Activated CD8-positive, alpha-beta T cell treated with anti-CD3 and anti-CD28 coated beads, Interleukin-2, amount 10 ng/mL, durations not matched to agents 7 days and 5 days (primary cell): ENCODE measurements at regions of chr5 and their contacts with region 1.

Region 1: GRCh38 chr5:112976432-112977309 is at the start of gene DCP2:
- DNase-seq: peak; percentile 98
- ATAC-seq: peak; percentile 98
- H3K4me3 Mint-ChIP-seq: peak within 1 kb of the TSS; percentile 97
- H3K27ac Mint-ChIP-seq: peak within 1 kb of the TSS; percentile 96
- H3K4me1 Mint-ChIP-seq: peaks cover 36% of the 10 kb centered on the region
- H3K27me3 Mint-ChIP-seq: no peaks in the 10 kb centered on the region
- total RNA-seq, gene DCP2: 119 to 128 TPM

Region 2: GRCh38 chr5:112355058-112355685 is 621.5 kb before region 1 on chr5:
- CTCF ChIA-PET with region 1: no interaction called
- POLR2A ChIA-PET with region 1: no interaction called
- DNase-seq: no peak
- ATAC-seq: no peak
- H3K4me3 Mint-ChIP-seq: no peak overlapping the region
- H3K27ac Mint-ChIP-seq: no peak overlapping the region
- H3K4me1 Mint-ChIP-seq: no peaks in the 10 kb centered on the region
- H3K27me3 Mint-ChIP-seq: no peaks in the 10 kb centered on the region

Region 3: GRCh38 chr5:112860929-112861637 is 115.6 kb before region 1 on chr5 and contains the start of gene SRP19:
- CTCF ChIA-PET with region 1: interaction called, 4 read pairs
- POLR2A ChIA-PET with region 1: interaction called, 12 read pairs
- DNase-seq: peak; percentile 95
- ATAC-seq: peak; percentile 97
- H3K4me3 Mint-ChIP-seq: peak within 1 kb of the TSS; percentile 95
- H3K27ac Mint-ChIP-seq: peak within 1 kb of the TSS; percentile 93
- H3K4me1 Mint-ChIP-seq: peaks cover 32% of the 10 kb centered on the region
- H3K27me3 Mint-ChIP-seq: peaks cover 18% of the 10 kb centered on the region
- total RNA-seq, gene SRP19: 51.2 to 56.6 TPM

Region 4: GRCh38 chr5:112921833-112922817 is 54.5 kb before region 1 on chr5 and contains the start of gene REEP5:
- CTCF ChIA-PET with region 1: interaction called, 13 read pairs
- POLR2A ChIA-PET with region 1: interaction called, 51 read pairs
- DNase-seq: peak; percentile 88
- ATAC-seq: peak; percentile 84
- H3K4me3 Mint-ChIP-seq: peak within 1 kb of the TSS; percentile 95
- H3K27ac Mint-ChIP-seq: peak within 1 kb of the TSS; percentile 97
- H3K4me1 Mint-ChIP-seq: peaks cover 70% of the 10 kb centered on the region
- H3K27me3 Mint-ChIP-seq: no peaks in the 10 kb centered on the region
- total RNA-seq, gene REEP5: 77.6 to 85.0 TPM

Region 5: DNA sequence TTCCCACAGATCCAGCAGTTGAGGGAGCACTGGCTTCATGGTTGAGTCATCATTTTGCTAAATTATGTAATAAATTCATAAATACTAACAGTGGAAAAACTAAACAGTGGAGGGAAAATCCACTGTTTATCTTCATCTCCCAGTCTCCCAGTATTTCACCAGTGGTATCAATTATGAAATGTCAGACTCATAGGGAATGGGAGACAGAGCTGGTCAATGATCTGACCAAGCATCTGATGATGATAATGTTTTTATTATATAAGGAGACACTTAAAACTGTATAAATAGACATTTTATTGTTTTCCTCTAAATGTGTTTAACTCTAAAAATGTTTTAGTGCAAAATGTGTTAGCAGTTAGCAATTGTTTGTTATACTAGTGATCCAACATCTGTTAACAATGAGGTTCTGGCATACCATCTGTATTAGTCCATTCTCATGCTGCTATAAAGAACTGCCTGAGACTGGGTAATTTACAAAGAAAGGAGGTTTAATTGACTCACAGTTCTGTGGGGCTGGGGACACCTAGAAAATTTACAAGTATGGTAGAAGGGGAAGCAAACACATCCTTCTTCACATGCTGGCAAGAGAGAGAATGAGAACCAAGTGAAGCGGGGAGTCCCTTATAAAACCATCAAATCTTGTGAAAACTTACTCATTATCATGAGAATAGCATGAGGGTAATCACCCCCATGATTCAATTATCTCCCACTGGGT is 42.9 kb before region 1 on chr5:
- CTCF ChIA-PET with region 1: interaction called, 5 read pairs
- POLR2A ChIA-PET with region 1: interaction called, 10 read pairs
- DNase-seq: no peak
- ATAC-seq: no peak
- H3K4me3 Mint-ChIP-seq: no peak overlapping the region
- H3K27ac Mint-ChIP-seq: no peak overlapping the region
- H3K4me1 Mint-ChIP-seq: peaks cover 40% of the 10 kb centered on the region
- H3K27me3 Mint-ChIP-seq: no peaks in the 10 kb centered on the region

Region 6: DNA sequence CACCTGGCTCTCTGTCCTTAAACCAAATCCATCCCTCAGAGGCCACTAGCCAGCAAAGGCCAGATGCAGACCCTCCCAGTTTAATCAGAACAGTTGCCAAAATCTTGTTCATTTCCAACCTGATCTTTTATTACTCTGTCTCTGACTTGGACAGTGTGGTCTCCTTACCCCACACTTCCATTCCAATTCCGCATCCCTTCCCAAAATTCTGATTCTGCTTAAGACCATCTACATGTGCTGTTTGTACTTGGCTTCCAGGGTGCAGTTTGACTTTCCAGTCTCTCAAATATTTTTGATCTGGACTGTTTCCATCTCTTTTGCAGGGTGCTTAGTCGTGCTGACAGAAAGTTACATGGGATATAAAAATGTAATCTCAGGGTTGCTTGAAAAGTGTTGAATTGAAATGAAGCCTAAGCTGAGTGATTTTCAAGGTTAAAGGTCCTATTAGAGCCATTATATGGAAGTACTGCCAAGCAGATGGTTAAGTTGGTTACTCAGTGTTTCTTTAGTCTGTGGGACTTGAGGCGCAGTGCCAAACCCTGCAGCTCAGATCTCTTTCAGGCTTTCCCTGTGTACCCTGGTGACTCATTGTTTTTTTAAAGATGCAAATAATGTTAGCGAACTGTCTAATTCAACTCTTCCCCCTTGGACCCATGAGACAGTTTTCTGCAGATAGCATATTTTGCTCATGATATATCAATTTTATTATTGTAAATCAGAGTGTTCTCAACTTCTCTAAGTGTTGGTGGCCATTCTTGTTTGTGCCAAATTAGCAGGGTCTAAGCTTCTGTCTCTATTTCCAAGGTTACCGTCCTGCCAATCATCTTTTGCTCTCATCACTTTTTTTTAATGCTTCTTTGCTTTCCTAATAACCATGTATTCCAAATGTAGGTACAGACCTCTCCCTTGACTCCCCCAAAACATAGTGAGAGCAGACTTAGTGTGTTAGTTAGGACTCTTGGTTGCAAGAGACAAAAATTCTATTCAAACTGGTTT is 18.3 kb before region 1 on chr5:
- CTCF ChIA-PET with region 1: interaction called, 47 read pairs
- POLR2A ChIA-PET with region 1: interaction called, 6 read pairs
- DNase-seq: no peak
- ATAC-seq: peak; percentile 39
- H3K4me3 Mint-ChIP-seq: no peak overlapping the region
- H3K27ac Mint-ChIP-seq: no peak overlapping the region
- H3K4me1 Mint-ChIP-seq: peaks cover 37% of the 10 kb centered on the region
- H3K27me3 Mint-ChIP-seq: peaks cover 6% of the 10 kb centered on the region

Region 7: GRCh38 chr5:113022661-113023060 is 46.0 kb after region 1 on chr5:
- CTCF ChIA-PET with region 1: no interaction called
- POLR2A ChIA-PET with region 1: interaction called, 14 read pairs
- DNase-seq: peak; percentile 39
- ATAC-seq: peak; percentile 91
- H3K4me3 Mint-ChIP-seq: peak overlapping the region; percentile 55
- H3K27ac Mint-ChIP-seq: peak overlapping the region; percentile 84
- H3K4me1 Mint-ChIP-seq: peaks cover 64% of the 10 kb centered on the region
- H3K27me3 Mint-ChIP-seq: no peaks in the 10 kb centered on the region

Region 8: DNA sequence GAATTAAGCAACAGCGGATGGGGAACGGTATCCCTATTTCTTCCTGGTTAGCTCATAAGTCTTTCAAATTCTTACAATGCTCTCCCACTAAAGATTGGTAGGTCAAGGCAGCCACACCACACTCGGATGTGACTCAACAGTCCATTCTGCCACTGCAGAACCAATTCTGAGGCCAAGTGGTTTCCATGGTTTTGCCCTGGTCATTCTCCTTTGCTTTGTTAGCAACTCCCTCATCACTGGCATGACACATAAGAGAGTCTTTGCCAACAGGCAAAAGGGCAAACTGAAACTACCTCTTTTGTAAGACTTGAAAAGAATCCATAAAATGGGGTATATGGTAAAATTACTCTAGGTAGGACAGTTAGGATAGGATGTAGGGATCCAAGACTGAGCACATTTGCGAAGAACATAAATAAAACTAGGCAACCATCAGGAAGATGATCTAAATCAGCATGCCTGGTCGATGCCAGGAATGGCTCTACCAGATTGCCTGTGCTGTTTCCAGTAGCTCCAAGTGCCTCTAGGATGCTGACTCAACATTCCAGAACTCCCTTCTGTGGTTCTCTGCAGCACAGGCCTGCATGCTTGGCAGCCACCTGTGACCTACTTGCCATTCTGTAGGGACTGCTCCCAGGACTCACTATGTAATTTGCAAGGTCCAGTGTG is 105.3 kb after region 1 on chr5:
- CTCF ChIA-PET with region 1: no interaction called
- POLR2A ChIA-PET with region 1: no interaction called
- DNase-seq: no peak
- ATAC-seq: no peak
- H3K4me3 Mint-ChIP-seq: no peak overlapping the region
- H3K27ac Mint-ChIP-seq: no peak overlapping the region
- H3K4me1 Mint-ChIP-seq: no peaks in the 10 kb centered on the region
- H3K27me3 Mint-ChIP-seq: no peaks in the 10 kb centered on the region